HCT116 (cell line): ENCODE measurements at regions of chr10 and their contacts with region 1.

Region 1: DNA sequence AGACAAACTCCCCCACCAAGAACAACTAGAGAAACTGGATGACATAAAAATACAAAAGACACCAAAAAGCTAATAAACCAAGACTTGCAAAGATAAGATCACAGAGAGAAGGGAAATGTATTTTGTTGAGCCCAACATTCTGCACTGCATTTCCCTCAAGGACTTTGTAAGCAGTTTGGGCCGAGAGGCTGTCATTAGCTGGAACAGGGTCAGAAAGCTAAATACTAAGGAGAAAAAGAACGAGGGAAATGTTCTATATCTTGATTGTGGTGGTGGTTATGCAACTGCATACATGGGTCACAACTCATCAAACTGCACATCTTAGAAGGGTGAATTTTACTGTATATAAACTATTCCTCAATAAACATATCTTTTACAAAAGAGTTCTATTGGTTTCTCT is 315.0 kb downstream of the IPMK start:
- DNase-seq: no peak
- ATAC-seq: no peak
- H3K4me3 ChIP-seq: no peak overlapping the region
- H3K27ac ChIP-seq: no peak overlapping the region
- H3K4me1 ChIP-seq: no peaks in the 10 kb centered on the region
- H3K27me3 ChIP-seq: no peaks in the 10 kb centered on the region
- CTCF ChIP-seq: no peak
- POLR2A ChIP-seq: no peak
- RAD21 ChIP-seq: no peak

Region 2: GRCh38 chr10:57973451-57973850 is 20.7 kb after region 1 on chr10:
- CTCF ChIA-PET with region 1: no interaction called
- POLR2A ChIA-PET with region 1: no interaction called
- RAD21 ChIA-PET with region 1: no interaction called
- intact Hi-C with region 1: no loop called
- DNase-seq: no peak
- ATAC-seq: no peak
- H3K4me3 ChIP-seq: no peak overlapping the region
- H3K27ac ChIP-seq: no peak overlapping the region
- H3K4me1 ChIP-seq: no peaks in the 10 kb centered on the region
- H3K27me3 ChIP-seq: no peaks in the 10 kb centered on the region
- CTCF ChIP-seq: no peak
- POLR2A ChIP-seq: no peak
- RAD21 ChIP-seq: no peak

Region 3: DNA sequence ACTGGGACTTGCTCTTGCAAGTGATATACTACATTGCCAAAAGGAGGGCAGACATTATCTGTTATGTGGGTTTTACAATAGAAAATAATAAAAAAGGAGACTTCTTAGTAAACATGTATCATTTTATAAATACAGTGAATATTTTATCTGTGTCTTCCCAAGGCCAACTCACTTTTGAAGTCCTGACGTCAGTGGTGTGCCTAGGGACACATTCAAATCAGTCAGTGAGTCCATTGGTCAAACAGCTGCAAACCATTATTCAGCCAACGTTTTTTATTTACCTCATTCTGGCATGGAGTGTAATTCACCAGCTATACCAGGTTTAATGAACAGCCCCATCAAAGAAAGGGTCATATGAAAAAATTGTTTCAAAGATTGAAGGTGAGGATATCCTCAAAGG is 51.2 kb after region 1 on chr10:
- CTCF ChIA-PET with region 1: no interaction called
- POLR2A ChIA-PET with region 1: no interaction called
- RAD21 ChIA-PET with region 1: no interaction called
- intact Hi-C with region 1: loop called (anchors 5 kb)
- DNase-seq: no peak
- ATAC-seq: no peak
- H3K4me3 ChIP-seq: no peak overlapping the region
- H3K27ac ChIP-seq: no peak overlapping the region
- H3K4me1 ChIP-seq: no peaks in the 10 kb centered on the region
- H3K27me3 ChIP-seq: no peaks in the 10 kb centered on the region
- CTCF ChIP-seq: no peak
- POLR2A ChIP-seq: no peak
- RAD21 ChIP-seq: no peak